Mammary epithelial cell (primary cell): ENCODE measurements at regions of chr2 and their contacts with region 1.

Region 1: DNA sequence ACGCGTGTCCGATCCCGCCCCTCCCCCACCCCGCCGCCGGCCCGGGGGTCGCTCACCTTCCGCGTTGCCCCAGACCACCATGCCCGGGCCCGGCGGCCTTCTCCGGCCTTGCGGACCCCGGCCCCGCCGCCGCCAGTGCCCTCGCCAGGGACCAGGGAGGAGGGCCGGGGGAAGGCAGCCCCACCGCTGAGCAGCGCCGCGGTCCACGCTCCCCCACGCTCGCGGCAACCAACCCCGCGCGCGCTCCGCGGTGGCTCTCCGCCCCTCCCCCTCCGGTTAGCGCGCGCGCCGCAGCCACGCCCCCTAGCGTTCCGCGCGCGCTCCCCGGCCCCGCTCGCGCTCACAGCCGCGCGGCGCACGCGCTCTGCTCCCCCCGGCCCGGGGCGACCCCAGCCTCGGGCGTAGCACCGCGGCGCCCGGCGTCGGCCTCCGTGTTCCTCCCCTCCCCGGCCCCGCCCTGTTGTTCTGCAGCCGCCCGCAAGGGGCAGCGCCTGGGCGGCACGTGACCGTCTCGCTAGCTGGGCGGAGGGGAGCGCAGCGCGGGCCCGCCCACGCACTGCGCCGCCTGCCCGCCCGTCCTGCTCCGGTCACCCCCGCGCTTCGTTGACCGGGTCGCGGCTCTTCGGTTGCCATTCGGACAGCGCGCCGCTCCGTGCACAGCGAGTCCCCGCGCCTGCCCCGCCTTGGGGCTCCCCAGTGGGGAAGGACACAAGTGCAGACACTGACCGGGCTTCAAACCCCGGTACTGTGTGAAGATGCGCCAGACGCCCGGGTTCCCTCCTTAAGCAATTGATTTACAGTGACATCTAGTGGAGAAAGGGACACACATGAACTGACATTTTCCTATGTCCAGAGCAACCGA is at the start of gene REV1:
- DNase-seq: peak; percentile 93
- H3K4me3 ChIP-seq: peak within 1 kb of the TSS; percentile 76 to 97 (median 82)
- H3K27ac ChIP-seq: peak within 1 kb of the TSS; percentile 82
- H3K4me1 ChIP-seq: peaks cover 32% of the 10 kb centered on the region
- H3K27me3 ChIP-seq: no peaks in the 10 kb centered on the region
- CTCF ChIP-seq: peak; percentile 51 to 73
- total RNA-seq, gene REV1: 36.3 to 38.4 TPM

Region 2: GRCh38 chr2:98649135-98649991 is 840.6 kb before region 1 on chr2:
- CTCF ChIA-PET with region 1: no interaction called
- dilution Hi-C with region 1: no loop called
- in situ Hi-C with region 1: no loop called
- intact Hi-C with region 1: loop called (anchors 5 kb)
- DNase-seq: peak; percentile 65
- H3K4me3 ChIP-seq: no peak overlapping the region
- H3K27ac ChIP-seq: no peak overlapping the region
- H3K4me1 ChIP-seq: peaks cover 7% of the 10 kb centered on the region
- H3K27me3 ChIP-seq: no peaks in the 10 kb centered on the region
- CTCF ChIP-seq: peak; percentile 99

Region 3: GRCh38 chr2:99085421-99085820 is 404.6 kb before region 1 on chr2:
- CTCF ChIA-PET with region 1: no interaction called
- dilution Hi-C with region 1: no loop called
- in situ Hi-C with region 1: no loop called
- intact Hi-C with region 1: loop called (anchors 5 kb)
- DNase-seq: peak; percentile 5
- H3K4me3 ChIP-seq: no peak overlapping the region
- H3K27ac ChIP-seq: no peak overlapping the region
- H3K4me1 ChIP-seq: no peaks in the 10 kb centered on the region
- H3K27me3 ChIP-seq: no peaks in the 10 kb centered on the region
- CTCF ChIP-seq: peak; percentile 29 to 50

Region 4: GRCh38 chr2:99180755-99181623 is 309.0 kb before region 1 on chr2 and contains the starts of genes MITD1 and MRPL30:
- CTCF ChIA-PET with region 1: no interaction called
- dilution Hi-C with region 1: no loop called
- in situ Hi-C with region 1: no loop called
- intact Hi-C with region 1: loop called (anchors 1 kb)
- DNase-seq: peak; percentile 96
- H3K4me3 ChIP-seq: peak within 1 kb of the TSS; percentile 92 to 97 (median 94)
- H3K27ac ChIP-seq: peak within 1 kb of the TSS; percentile 75
- H3K4me1 ChIP-seq: peaks cover 3% of the 10 kb centered on the region
- H3K27me3 ChIP-seq: no peaks in the 10 kb centered on the region
- CTCF ChIP-seq: no peak
- total RNA-seq, gene MITD1: 10.2 to 26.2 TPM
- total RNA-seq, gene MRPL30: 33.5 to 35.1 TPM

Region 5: GRCh38 chr2:99403524-99403923 is 86.5 kb before region 1 on chr2:
- CTCF ChIA-PET with region 1: no interaction called
- dilution Hi-C with region 1: no loop called
- in situ Hi-C with region 1: no loop called
- intact Hi-C with region 1: loop called (anchors 2 kb)
- DNase-seq: no peak
- H3K4me3 ChIP-seq: no peak overlapping the region
- H3K27ac ChIP-seq: no peak overlapping the region
- H3K4me1 ChIP-seq: no peaks in the 10 kb centered on the region
- H3K27me3 ChIP-seq: no peaks in the 10 kb centered on the region
- CTCF ChIP-seq: no peak

Region 6: GRCh38 chr2:99414566-99414965 is 75.4 kb before region 1 on chr2:
- CTCF ChIA-PET with region 1: no interaction called
- dilution Hi-C with region 1: no loop called
- in situ Hi-C with region 1: no loop called
- intact Hi-C with region 1: no loop called
- DNase-seq: no peak
- H3K4me3 ChIP-seq: no peak overlapping the region
- H3K27ac ChIP-seq: no peak overlapping the region
- H3K4me1 ChIP-seq: no peaks in the 10 kb centered on the region
- H3K27me3 ChIP-seq: no peaks in the 10 kb centered on the region
- CTCF ChIP-seq: no peak

Region 7: DNA sequence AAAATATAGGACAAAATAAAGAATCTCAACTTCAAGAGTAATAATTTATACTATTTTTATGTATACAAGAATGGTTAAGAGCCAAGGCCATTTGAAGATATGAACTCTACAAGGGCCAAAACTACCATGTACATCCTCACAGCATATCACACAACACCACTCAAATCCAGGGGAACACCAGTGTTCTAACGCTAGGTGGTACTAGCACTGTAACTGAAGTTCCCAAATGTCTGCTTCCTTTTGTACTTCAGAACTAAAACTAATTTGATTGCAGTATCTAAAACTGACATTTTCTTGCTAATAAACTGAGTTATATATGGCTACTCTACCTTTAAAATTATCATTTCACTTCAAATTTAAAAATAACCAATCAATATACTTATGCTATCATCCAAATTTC is 47.2 kb before region 1 on chr2:
- CTCF ChIA-PET with region 1: no interaction called
- dilution Hi-C with region 1: no loop called
- in situ Hi-C with region 1: loop called in 1 of 2 experiments (anchors 10 kb)
- intact Hi-C with region 1: loop called (anchors 2 kb)
- DNase-seq: no peak
- H3K4me3 ChIP-seq: no peak overlapping the region
- H3K27ac ChIP-seq: no peak overlapping the region
- H3K4me1 ChIP-seq: peaks cover 11% of the 10 kb centered on the region
- H3K27me3 ChIP-seq: no peaks in the 10 kb centered on the region
- CTCF ChIP-seq: peak; percentile 37 to 50